ENCODE measurements at regions of chr20 and their contacts with region 1.

Region 1: DNA sequence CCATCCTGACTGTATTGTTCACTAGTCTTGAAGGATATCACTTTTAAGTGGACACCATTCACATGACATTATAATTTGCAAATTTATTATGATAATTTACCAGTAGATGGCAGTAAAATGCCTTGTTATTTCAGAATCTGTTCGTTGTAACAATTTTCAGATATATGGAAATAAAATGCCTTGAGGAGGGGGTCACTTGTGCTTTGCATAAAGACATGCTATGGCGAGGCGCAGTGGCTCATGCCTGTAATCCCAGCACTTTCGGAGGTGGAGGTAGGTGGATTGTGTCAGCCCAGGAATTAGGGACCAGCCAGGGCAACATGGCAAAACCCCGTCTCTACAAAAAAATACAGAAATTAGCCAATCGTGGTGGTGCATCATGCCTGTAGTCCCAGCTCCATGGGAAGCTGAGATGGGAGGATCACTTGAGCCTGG is 9.0 kb upstream of the NCOA6 start:
- DNase-seq: peak; percentile 65
- ATAC-seq: no peak
- H3K4me3 ChIP-seq: no peak overlapping the region
- H3K4me3 Mint-ChIP-seq: no peak overlapping the region
- H3K27ac ChIP-seq: no peak overlapping the region
- H3K27ac Mint-ChIP-seq: peak overlapping the region; percentile 42
- H3K4me1 ChIP-seq: no peaks in the 10 kb centered on the region
- H3K4me1 Mint-ChIP-seq: peaks cover 1% of the 10 kb centered on the region
- H3K27me3 ChIP-seq: peaks cover 0 to 4% (median 0%) of the 10 kb centered on the region in 4 experiments
- H3K27me3 Mint-ChIP-seq: peaks cover 30% of the 10 kb centered on the region
- CTCF ChIP-seq: peak; percentile 77

Region 2: DNA sequence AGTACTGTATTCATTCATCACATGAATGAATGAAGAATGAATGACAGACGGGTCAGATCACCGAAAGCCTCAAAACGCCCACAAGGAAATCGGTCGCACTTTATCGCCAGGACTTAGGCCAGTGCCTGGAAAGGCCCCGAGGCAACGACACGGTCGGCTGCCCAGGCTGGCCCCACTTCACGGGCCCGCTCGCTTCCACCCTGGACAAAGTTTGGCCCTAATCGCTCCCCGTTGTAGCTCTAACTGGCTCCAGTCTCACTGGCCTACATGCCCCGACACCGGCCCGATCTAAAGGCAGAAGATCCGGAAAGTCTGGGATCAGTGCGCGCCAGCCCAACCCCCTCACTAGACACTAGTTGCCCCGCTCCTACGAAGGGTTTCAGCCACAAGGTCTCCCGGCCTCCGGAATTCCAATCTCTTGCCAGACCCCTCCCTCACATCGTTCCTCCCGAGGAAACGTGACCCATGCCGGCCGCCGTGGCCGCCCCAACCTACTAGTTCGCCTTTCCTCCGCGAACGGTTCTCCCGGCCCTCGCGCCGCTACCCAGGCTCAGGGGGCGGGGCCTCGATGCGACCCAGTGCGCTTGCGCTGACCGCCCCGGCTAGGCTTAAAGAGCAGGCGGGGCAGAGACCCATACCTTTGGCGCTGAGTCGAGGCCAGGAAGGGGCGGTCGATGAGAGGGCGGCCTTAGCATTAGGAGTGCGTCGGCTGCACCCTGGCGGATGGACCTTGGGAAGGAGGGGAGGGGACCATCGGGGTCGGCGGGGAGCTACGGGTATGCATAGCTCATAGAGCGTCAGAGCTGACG is 121.0 kb after region 1 on chr20 and contains the starts of genes GSS and MYH7B:
- CTCF ChIA-PET with region 1: interaction called, 3 read pairs
- POLR2A ChIA-PET with region 1: no interaction called
- intact Hi-C with region 1: loop called (anchors 1 kb)
- DNase-seq: peak; percentile 95
- ATAC-seq: peak; percentile 93
- H3K4me3 ChIP-seq: peak within 1 kb of the TSS; percentile 58 to 88 (median 73)
- H3K4me3 Mint-ChIP-seq: peak within 1 kb of the TSS; percentile 97
- H3K27ac ChIP-seq: peak within 1 kb of the TSS; percentile 42 to 79
- H3K27ac Mint-ChIP-seq: peak within 1 kb of the TSS; percentile 93
- H3K4me1 ChIP-seq: peaks cover 5 to 16% of the 10 kb centered on the region in 2 donors
- H3K4me1 Mint-ChIP-seq: peaks cover 25% of the 10 kb centered on the region
- H3K27me3 ChIP-seq: no peaks in the 10 kb centered on the region
- H3K27me3 Mint-ChIP-seq: no peaks in the 10 kb centered on the region
- CTCF ChIP-seq: no peak
- total RNA-seq, gene GSS: 22.0 and 22.5 TPM in 2 replicates
- total RNA-seq, gene MYH7B: 0.66 and 0.79 TPM in 2 replicates

Region 3: GRCh38 chr20:35207950-35208611 is 373.6 kb after region 1 on chr20:
- CTCF ChIA-PET with region 1: interaction called, 19 read pairs
- POLR2A ChIA-PET with region 1: no interaction called
- intact Hi-C with region 1: no loop called
- DNase-seq: peak; percentile 81
- ATAC-seq: peak; percentile 84
- H3K4me3 ChIP-seq: no peak overlapping the region
- H3K4me3 Mint-ChIP-seq: no peak overlapping the region
- H3K27ac ChIP-seq: no peak overlapping the region
- H3K27ac Mint-ChIP-seq: no peak overlapping the region
- H3K4me1 ChIP-seq: no peaks in the 10 kb centered on the region
- H3K4me1 Mint-ChIP-seq: no peaks in the 10 kb centered on the region
- H3K27me3 ChIP-seq: no peaks in the 10 kb centered on the region
- H3K27me3 Mint-ChIP-seq: no peaks in the 10 kb centered on the region
- CTCF ChIP-seq: peak; percentile 87

Region 4: DNA sequence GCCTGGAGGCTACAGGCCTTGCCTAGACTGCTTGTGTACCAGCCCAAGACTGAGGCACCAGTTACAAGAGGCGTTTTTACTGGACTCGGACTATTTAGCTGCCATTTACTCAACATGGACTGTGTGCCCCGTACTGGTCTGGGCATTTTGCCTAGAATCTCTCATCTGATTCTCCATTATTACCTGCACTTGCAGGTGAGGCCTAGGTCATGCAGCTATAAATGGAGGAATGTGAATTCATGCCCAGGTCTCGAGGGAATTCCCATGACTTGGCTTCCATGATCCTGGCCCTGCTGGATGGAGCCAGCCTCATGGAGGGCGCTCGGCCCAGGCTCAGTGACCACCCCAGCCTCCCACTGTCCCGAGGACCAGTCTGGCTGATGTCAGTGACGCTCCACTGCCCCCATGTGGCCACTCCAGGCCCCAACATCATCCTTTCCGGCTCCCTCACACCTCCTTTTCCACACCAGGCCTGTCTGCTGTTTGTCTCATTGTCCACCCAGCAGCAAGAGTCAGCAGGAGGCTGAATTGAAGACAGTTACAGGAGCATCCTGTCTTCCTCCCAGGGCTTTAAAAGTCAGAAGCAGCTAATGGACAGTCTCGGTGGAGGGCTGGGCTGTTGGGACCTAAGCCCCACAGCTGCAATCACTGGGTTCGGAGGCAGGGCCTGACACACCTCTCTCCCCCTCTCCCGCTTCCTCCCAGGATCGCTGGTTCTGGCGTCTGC is 434.7 kb after region 1 on chr20:
- CTCF ChIA-PET with region 1: interaction called, 12 read pairs
- POLR2A ChIA-PET with region 1: no interaction called
- intact Hi-C with region 1: no loop called
- DNase-seq: peak; percentile 55
- ATAC-seq: peak; percentile 65
- H3K4me3 ChIP-seq: no peak overlapping the region
- H3K4me3 Mint-ChIP-seq: no peak overlapping the region
- H3K27ac ChIP-seq: no peak overlapping the region
- H3K27ac Mint-ChIP-seq: no peak overlapping the region
- H3K4me1 ChIP-seq: no peaks in the 10 kb centered on the region
- H3K4me1 Mint-ChIP-seq: peaks cover 1% of the 10 kb centered on the region
- H3K27me3 ChIP-seq: no peaks in the 10 kb centered on the region
- H3K27me3 Mint-ChIP-seq: no peaks in the 10 kb centered on the region
- CTCF ChIP-seq: peak; percentile 65

Region 5: DNA sequence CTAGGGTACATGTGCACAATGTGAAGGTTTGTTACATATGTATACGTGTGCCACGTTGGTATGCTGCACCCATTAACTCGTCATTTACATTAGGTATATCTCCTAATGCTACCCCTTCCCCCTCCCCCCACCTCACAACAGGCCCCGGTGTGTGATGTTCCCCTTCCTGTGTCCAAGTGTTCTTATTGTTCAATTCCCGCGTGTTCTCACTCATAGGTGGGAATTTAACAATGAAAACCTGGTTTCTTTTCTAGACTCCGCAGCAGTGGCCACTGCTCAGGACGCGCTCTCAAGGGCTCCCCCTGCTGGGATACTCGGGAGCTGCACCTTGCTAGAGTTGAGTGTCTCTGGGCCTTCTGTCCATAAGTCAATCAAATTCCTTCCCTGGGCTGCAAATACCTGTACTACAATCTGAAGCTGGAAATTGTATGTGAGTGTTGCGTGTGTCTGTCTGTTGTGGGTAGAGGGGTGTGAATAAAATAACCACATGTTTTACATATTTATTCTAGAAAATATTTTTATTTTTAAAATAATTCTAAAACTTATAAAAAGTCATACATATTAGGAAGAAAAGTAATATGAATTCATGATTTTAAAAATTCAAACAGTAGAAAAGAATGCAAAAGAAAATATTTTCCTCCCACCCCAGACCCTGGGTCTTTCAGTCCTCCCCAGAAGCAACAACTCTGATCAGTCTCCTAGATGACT is 612.8 kb after region 1 on chr20:
- CTCF ChIA-PET with region 1: interaction called, 3 read pairs
- POLR2A ChIA-PET with region 1: no interaction called
- intact Hi-C with region 1: loop called (anchors 5 kb)
- DNase-seq: peak; percentile 84
- ATAC-seq: peak; percentile 99
- H3K4me3 ChIP-seq: peak overlapping the region in 3 of 5 experiments; percentile 30 to 52 (median 31)
- H3K4me3 Mint-ChIP-seq: peak overlapping the region; percentile 87
- H3K27ac ChIP-seq: no peak overlapping the region
- H3K27ac Mint-ChIP-seq: no peak overlapping the region
- H3K4me1 ChIP-seq: peaks cover 0 to 3% of the 10 kb centered on the region in 2 donors
- H3K4me1 Mint-ChIP-seq: peaks cover 6% of the 10 kb centered on the region
- H3K27me3 ChIP-seq: no peaks in the 10 kb centered on the region
- H3K27me3 Mint-ChIP-seq: peaks cover 8% of the 10 kb centered on the region
- CTCF ChIP-seq: peak; percentile 97

Measured in B cell (primary cell).